Activated B cell treated with CpG ODN at 0.5 μM for 24 hours (primary cell): ENCODE measurements at regions of chr22 and their contacts with region 1.

Region 1: GRCh38 chr22:31749636-31750364 is at the start of gene PRR14L:
- DNase-seq: peak; percentile 100
- ATAC-seq: peak; percentile 73
- H3K4me3 Mint-ChIP-seq: peak within 1 kb of the TSS; percentile 92
- H3K27ac Mint-ChIP-seq: peak within 1 kb of the TSS; percentile 96
- H3K4me1 Mint-ChIP-seq: peaks cover 52% of the 10 kb centered on the region
- H3K27me3 Mint-ChIP-seq: no peaks in the 10 kb centered on the region
- CTCF ChIP-seq: no peak
- total RNA-seq, gene PRR14L: 49.7 and 59.5 TPM in 2 replicates

Region 2: GRCh38 chr22:30968924-30969539 is 780.8 kb before region 1 on chr22 and contains the start of gene TUG1:
- CTCF ChIA-PET with region 1: no interaction called
- POLR2A ChIA-PET with region 1: no interaction called
- intact Hi-C with region 1: loop called (anchors 5 kb)
- DNase-seq: peak; percentile 93
- ATAC-seq: peak; percentile 92
- H3K4me3 Mint-ChIP-seq: peak within 1 kb of the TSS; percentile 95
- H3K27ac Mint-ChIP-seq: peak within 1 kb of the TSS; percentile 94
- H3K4me1 Mint-ChIP-seq: peaks cover 56% of the 10 kb centered on the region
- H3K27me3 Mint-ChIP-seq: no peaks in the 10 kb centered on the region
- CTCF ChIP-seq: no peak
- total RNA-seq, gene TUG1: 70.4 and 83.0 TPM in 2 replicates

Region 3: GRCh38 chr22:30979932-30980331 is 769.9 kb before region 1 on chr22:
- CTCF ChIA-PET with region 1: no interaction called
- POLR2A ChIA-PET with region 1: no interaction called
- intact Hi-C with region 1: no loop called
- DNase-seq: no peak
- ATAC-seq: no peak
- H3K4me3 Mint-ChIP-seq: no peak overlapping the region
- H3K27ac Mint-ChIP-seq: no peak overlapping the region
- H3K4me1 Mint-ChIP-seq: peaks cover 4% of the 10 kb centered on the region
- H3K27me3 Mint-ChIP-seq: no peaks in the 10 kb centered on the region
- CTCF ChIP-seq: no peak

Region 4: GRCh38 chr22:31399211-31400028 is 350.4 kb before region 1 on chr22 and contains the start of gene DRG1:
- CTCF ChIA-PET with region 1: no interaction called
- POLR2A ChIA-PET with region 1: no interaction called
- intact Hi-C with region 1: loop called (anchors 1 kb)
- DNase-seq: peak; percentile 97
- ATAC-seq: peak; percentile 98
- H3K4me3 Mint-ChIP-seq: peak within 1 kb of the TSS; percentile 93
- H3K27ac Mint-ChIP-seq: peak within 1 kb of the TSS; percentile 88
- H3K4me1 Mint-ChIP-seq: peaks cover 20% of the 10 kb centered on the region
- H3K27me3 Mint-ChIP-seq: no peaks in the 10 kb centered on the region
- CTCF ChIP-seq: no peak
- total RNA-seq, gene DRG1: 68.5 and 71.1 TPM in 2 replicates

Region 5: DNA sequence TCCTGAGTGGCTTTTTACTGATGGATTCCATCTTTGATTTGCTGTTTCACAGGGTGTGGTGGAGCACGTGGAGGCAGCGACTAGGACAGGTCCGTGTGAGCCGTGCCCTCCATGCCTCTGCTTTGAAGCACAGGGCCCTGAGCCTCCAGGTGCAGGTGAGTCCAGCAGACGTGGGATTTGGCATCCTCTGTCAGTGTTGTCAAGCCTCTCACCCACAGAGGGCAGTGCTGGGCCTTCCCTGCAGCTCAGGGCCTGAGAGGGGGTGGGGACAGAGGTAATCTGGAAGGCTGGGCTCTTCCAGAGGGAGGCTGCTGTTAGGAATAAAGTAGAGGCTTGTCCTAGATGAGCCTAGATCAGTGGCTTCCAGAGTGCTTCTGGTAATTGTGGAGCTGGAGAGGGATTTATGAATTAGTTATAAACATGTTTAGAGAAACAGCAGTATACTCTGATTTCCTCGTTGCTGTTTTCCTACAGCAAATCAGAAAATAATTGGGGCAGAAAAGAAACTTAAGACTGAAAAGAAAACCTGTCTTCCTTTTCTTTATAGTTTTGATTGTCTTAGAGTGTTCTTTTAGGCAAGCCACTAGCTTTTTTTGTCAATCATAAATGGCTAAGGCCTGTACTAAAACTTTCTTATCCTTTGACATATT is 188.4 kb before region 1 on chr22:
- CTCF ChIA-PET with region 1: no interaction called
- POLR2A ChIA-PET with region 1: no interaction called
- intact Hi-C with region 1: loop called (anchors 10 kb)
- DNase-seq: peak; percentile 28
- ATAC-seq: peak; percentile 91
- H3K4me3 Mint-ChIP-seq: no peak overlapping the region
- H3K27ac Mint-ChIP-seq: no peak overlapping the region
- H3K4me1 Mint-ChIP-seq: no peaks in the 10 kb centered on the region
- H3K27me3 Mint-ChIP-seq: no peaks in the 10 kb centered on the region
- CTCF ChIP-seq: no peak

Region 6: GRCh38 chr22:31676700-31677099 is 73.1 kb before region 1 on chr22:
- CTCF ChIA-PET with region 1: no interaction called
- POLR2A ChIA-PET with region 1: interaction called, 10 read pairs
- intact Hi-C with region 1: loop called (anchors 1 kb)
- DNase-seq: peak; percentile 84
- ATAC-seq: peak; percentile 99
- H3K4me3 Mint-ChIP-seq: peak overlapping the region; percentile 96
- H3K27ac Mint-ChIP-seq: peak overlapping the region; percentile 94
- H3K4me1 Mint-ChIP-seq: peaks cover 25% of the 10 kb centered on the region
- H3K27me3 Mint-ChIP-seq: no peaks in the 10 kb centered on the region
- CTCF ChIP-seq: no peak

Region 7: GRCh38 chr22:32411829-32412592 is 662.2 kb after region 1 on chr22 and contains the start of gene RTCB:
- CTCF ChIA-PET with region 1: no interaction called
- POLR2A ChIA-PET with region 1: interaction called, 4 read pairs
- intact Hi-C with region 1: loop called (anchors 10 kb)
- DNase-seq: peak; percentile 93
- ATAC-seq: peak; percentile 65
- H3K4me3 Mint-ChIP-seq: peak within 1 kb of the TSS; percentile 97
- H3K27ac Mint-ChIP-seq: peak within 1 kb of the TSS; percentile 97
- H3K4me1 Mint-ChIP-seq: peaks cover 56% of the 10 kb centered on the region
- H3K27me3 Mint-ChIP-seq: peaks cover 7% of the 10 kb centered on the region
- CTCF ChIP-seq: no peak
- total RNA-seq, gene RTCB: 112 and 119 TPM in 2 replicates